HEK293 (cell line): ENCODE measurements at regions of chr19 and their contacts with region 1.

Region 1: DNA sequence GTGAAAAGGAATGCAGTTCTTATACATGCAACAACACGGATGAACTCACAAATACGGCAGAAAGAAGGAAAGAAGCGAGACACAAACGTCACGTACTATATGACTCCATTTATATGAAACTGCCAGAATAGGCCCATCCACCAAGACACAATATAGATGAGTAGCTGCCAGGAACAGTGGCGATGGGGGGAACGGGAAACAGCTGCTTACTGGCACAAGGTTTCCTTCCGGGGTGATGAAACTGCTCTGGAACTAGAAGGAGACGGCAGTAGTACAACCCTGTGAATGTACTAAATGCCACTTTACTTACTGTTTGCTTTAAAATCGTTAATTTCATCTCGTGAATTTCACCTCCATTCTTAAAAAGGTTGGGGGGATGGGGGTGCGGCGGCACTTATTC is 28.9 kb downstream of the MLLT1 start:
- H3K4me3 ChIP-seq: no peak overlapping the region
- H3K27ac ChIP-seq: no peak overlapping the region
- H3K4me1 ChIP-seq: no peaks in the 10 kb centered on the region
- CTCF ChIP-seq: no peak

Region 2: GRCh38 chr19:6233827-6234511 is 16.9 kb before region 1 on chr19:
- CTCF ChIA-PET with region 1: interaction called, 10 read pairs
- POLR2A ChIA-PET with region 1: no interaction called
- H3K4me3 ChIP-seq: no peak overlapping the region
- H3K27ac ChIP-seq: no peak overlapping the region
- H3K4me1 ChIP-seq: no peaks in the 10 kb centered on the region; the same call in 1 of the 2 replicates
- CTCF ChIP-seq: no peak